ENCODE measurements at regions of chr14 and their contacts with region 1.

Region 1: GRCh38 chr14:99683619-99684355 is at the start of gene CYP46A1:
- H3K4me3 ChIP-seq: peak within 1 kb of the TSS; percentile 61
- H3K27ac ChIP-seq: peak within 1 kb of the TSS; percentile 54; the same call in 1 of the 2 replicates
- H3K4me1 ChIP-seq: no peaks in the 10 kb centered on the region
- CTCF ChIP-seq: 0 out of 2 replicates have a peak, but pooled peaks have one; percentile 22

Region 2: DNA sequence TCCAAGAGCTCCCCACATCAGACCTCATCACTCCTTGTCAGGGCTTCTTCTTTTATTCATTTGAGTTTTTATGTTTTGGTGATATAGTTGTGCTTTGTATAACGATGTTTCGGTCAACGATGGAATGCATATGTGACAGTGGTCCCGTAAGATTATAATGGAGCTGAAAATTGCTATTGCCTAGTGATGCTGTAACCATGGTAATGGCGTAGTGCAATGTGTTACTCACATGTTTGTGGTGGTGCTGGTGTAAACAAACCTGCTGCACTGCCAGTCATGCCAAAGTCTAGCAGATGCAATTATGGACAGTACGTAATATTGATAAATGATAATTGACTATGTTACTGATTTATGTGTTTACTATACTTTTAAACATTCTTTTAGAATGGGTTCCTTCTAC is 16.6 kb after region 1 on chr14:
- CTCF ChIA-PET with region 1: interaction called, 11 read pairs
- POLR2A ChIA-PET with region 1: no interaction called
- H3K4me3 ChIP-seq: no peak overlapping the region
- H3K27ac ChIP-seq: no peak overlapping the region
- H3K4me1 ChIP-seq: no peaks in the 10 kb centered on the region
- CTCF ChIP-seq: no peak

Region 3: DNA sequence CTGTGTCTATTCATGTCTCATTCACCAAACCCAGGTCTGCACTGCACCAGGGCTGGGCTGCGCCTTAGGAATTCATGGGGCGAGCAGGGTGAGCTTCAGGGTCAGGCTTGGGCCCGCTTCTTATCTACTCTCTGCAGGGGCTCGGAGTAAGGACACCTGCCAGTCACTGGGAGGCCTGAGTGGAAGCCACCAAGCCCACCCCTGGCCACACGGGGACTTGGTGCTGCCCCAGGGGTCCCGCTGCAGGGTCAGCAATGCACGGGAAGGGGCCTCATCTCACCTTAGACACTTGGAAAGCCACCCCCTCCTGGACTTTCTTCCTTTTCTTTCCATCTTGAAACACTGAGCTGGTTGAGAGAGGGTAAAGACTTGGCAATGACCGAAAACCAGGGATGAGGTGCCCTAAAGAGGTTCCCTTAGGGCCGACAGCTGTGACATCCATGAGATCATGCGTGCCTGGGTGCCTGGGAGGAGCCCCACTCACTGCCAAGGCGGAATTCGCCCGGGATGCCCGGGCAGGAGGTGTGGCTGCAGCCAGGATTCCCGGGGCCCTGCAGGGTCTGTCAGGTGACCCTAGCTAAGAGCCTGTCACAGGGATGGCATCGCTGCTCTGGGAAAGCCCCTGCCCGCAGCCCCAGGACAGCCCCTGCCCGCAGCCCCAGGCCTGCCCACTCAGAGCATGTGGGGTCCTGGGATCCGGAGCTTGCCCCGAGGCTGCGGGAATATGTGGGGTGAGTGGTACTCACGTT is 64.0 kb after region 1 on chr14:
- CTCF ChIA-PET with region 1: no interaction called
- POLR2A ChIA-PET with region 1: no interaction called
- H3K4me3 ChIP-seq: no peak overlapping the region
- H3K27ac ChIP-seq: no peak overlapping the region
- H3K4me1 ChIP-seq: peaks cover 34% of the 10 kb centered on the region
- CTCF ChIP-seq: no peak

Region 4: GRCh38 chr14:99884834-99885648 is 201.3 kb after region 1 on chr14:
- CTCF ChIA-PET with region 1: interaction called, 12 read pairs
- POLR2A ChIA-PET with region 1: interaction called, 3 read pairs
- H3K4me3 ChIP-seq: no peak overlapping the region
- H3K27ac ChIP-seq: no peak overlapping the region
- H3K4me1 ChIP-seq: peaks cover 3% of the 10 kb centered on the region; the same call in 1 of the 2 replicates
- CTCF ChIP-seq: peak; percentile 44; the same call in 1 of the 2 replicates